Panc1 (cell line): ENCODE measurements at regions of chr17 and their contacts with region 1.

Region 1: DNA sequence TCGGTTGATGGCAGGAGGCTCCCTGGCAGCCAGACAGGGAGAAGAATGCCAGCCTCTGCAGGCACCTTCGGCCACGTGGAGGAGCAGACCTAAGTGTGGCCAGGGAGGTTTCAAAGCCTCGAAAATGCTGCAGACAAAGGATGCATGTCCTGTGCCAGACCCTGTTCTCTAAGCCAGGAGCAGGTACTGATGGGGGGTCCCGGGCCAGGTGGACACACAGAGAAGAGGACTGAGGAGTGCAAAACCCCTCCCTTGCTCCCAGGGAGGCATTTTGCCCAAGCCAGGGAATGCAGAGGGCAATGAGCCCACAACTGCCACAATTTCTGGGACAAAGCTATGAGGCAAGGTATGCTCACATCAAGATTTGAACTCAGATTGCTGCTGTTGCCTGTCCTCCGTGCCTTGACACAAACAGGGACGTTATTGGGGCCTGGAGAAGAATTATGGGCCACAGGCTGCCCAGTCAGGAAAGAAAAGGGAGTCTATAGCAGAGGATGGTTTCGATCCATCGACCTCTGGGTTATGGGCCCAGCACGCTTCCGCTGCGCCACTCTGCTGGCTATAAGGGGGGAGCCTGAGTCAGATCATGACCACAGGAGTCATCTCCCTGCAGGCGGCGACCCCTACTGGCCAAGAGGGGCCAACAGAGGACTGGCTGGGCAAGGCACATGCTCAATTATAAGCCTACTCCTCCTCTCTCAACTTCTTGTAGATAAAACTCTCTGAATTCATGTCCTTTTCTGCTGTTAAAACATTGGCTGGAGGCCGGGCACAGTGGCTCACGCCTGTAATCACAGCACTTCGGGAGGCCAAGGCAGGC is 25.1 kb upstream of the FOXK2 start:
- DNase-seq: peak; percentile 97
- ATAC-seq: peak; percentile 91
- H3K4me3 ChIP-seq: peak overlapping the region; percentile 30 to 60
- H3K27ac ChIP-seq: peak overlapping the region; percentile 82
- H3K4me1 ChIP-seq: peaks cover 32% of the 10 kb centered on the region
- H3K27me3 ChIP-seq: no peaks in the 10 kb centered on the region
- CTCF ChIP-seq: peak; percentile 98

Region 2: DNA sequence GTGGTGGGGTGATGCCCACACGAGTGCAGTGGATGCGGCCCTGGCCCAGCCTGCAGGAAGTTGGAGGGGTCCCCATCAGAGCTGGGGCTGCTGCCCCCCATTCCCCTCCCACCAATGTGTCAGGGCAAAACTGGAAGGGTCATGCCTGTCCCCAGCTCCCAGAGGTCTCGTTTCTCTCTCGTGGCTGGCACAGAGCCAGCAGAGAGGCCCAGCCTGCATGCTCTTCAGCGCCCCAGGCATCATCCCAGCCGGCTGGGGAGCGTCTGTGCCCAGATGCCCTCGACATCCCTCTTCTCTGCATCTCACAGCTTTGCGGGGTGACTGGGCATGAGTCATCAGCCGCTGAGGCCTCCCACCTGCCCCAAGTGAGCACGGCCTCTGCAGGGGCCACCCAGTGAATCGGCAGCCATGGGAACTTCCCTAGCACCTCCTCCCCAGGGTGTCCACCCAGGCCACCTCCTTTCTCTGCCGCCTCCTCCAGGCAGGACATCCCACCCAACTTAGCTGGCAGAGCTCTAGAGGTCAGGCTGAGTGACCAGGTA is 211.2 kb before region 1 on chr17:
- CTCF ChIA-PET with region 1: no interaction called
- POLR2A ChIA-PET with region 1: interaction called, 13 read pairs
- in situ Hi-C with region 1: no loop called
- intact Hi-C with region 1: no loop called
- DNase-seq: no peak
- ATAC-seq: peak; percentile 67
- H3K4me3 ChIP-seq: no peak overlapping the region
- H3K27ac ChIP-seq: no peak overlapping the region
- H3K4me1 ChIP-seq: peaks cover 23% of the 10 kb centered on the region
- H3K27me3 ChIP-seq: no peaks in the 10 kb centered on the region
- CTCF ChIP-seq: no peak

Region 3: GRCh38 chr17:82475458-82475857 is 19.0 kb before region 1 on chr17:
- CTCF ChIA-PET with region 1: interaction called, 10 read pairs
- POLR2A ChIA-PET with region 1: no interaction called
- in situ Hi-C with region 1: no loop called
- intact Hi-C with region 1: no loop called
- DNase-seq: no peak
- ATAC-seq: no peak
- H3K4me3 ChIP-seq: no peak overlapping the region
- H3K27ac ChIP-seq: no peak overlapping the region
- H3K4me1 ChIP-seq: no peaks in the 10 kb centered on the region
- H3K27me3 ChIP-seq: no peaks in the 10 kb centered on the region
- CTCF ChIP-seq: no peak

Region 4: GRCh38 chr17:82518826-82519810 is 24.7 kb after region 1 on chr17 and contains the start of gene FOXK2:
- CTCF ChIA-PET with region 1: interaction called, 4 read pairs
- POLR2A ChIA-PET with region 1: interaction called, 12 read pairs
- in situ Hi-C with region 1: no loop called
- intact Hi-C with region 1: no loop called
- DNase-seq: no peak
- ATAC-seq: peak; percentile 99
- H3K4me3 ChIP-seq: peak within 1 kb of the TSS; percentile 68 to 87
- H3K27ac ChIP-seq: peak within 1 kb of the TSS; percentile 89
- H3K4me1 ChIP-seq: peaks cover 6% of the 10 kb centered on the region; the same call in 1 of the 2 replicates
- H3K27me3 ChIP-seq: no peaks in the 10 kb centered on the region
- CTCF ChIP-seq: no peak
- total RNA-seq, gene FOXK2: 143 TPM